ENCODE measurements at regions of chr1 and their contacts with region 1.

Region 1: GRCh38 chr1:229258031-229258756 is 12.7 kb upstream of the RAB4A start:
- DNase-seq: peak; percentile 75
- H3K4me3 Mint-ChIP-seq: no peak overlapping the region
- H3K27ac Mint-ChIP-seq: no peak overlapping the region
- H3K4me1 Mint-ChIP-seq: peaks cover 28% of the 10 kb centered on the region
- H3K27me3 Mint-ChIP-seq: no peaks in the 10 kb centered on the region

Region 2: GRCh38 chr1:228500901-228501871 is 757.0 kb before region 1 on chr1:
- CTCF ChIA-PET with region 1: no interaction called
- intact Hi-C with region 1: loop called (anchors 2 kb)
- DNase-seq: peak; percentile 97
- H3K4me3 Mint-ChIP-seq: peak overlapping the region; percentile 40
- H3K27ac Mint-ChIP-seq: peak overlapping the region; percentile 73
- H3K4me1 Mint-ChIP-seq: peaks cover 20% of the 10 kb centered on the region
- H3K27me3 Mint-ChIP-seq: no peaks in the 10 kb centered on the region

Region 3: GRCh38 chr1:228691926-228692325 is 566.3 kb before region 1 on chr1:
- CTCF ChIA-PET with region 1: interaction called, 6 read pairs
- intact Hi-C with region 1: loop called (anchors 1 kb)
- DNase-seq: peak; percentile 46
- H3K4me3 Mint-ChIP-seq: no peak overlapping the region
- H3K27ac Mint-ChIP-seq: no peak overlapping the region
- H3K4me1 Mint-ChIP-seq: peaks cover 10% of the 10 kb centered on the region
- H3K27me3 Mint-ChIP-seq: peaks cover 9% of the 10 kb centered on the region

Region 4: DNA sequence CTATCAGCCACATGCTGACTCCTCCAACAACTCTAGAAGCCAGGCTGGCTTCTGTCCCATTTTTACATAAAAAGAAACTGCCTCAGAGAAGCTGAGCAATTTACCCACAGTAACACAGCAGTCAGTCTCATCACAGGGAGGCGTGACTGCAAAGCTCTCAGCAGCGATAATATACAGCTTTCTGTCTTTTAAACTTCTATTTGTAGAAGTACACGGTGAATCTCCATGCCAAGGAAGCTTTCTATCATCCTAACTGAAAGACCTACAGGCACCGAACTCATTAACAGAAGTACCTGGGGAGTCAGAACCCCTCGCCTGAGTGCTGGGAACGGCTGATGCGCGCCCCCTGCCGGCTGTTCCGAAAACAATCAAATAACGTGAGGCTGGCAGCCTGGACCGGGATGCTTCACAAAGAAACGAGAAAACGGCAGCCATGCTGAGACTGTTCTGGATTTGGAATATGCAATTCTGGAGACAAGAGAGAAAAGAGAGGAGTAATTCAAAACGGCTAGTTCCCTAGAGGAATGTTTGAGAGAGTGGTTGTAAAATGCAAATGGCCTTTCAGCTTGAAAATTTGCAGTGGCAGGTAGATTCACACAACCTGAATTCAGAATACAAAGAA is 30.8 kb before region 1 on chr1:
- CTCF ChIA-PET with region 1: interaction called, 24 read pairs
- intact Hi-C with region 1: loop called (anchors 2 kb)
- DNase-seq: peak; percentile 85
- H3K4me3 Mint-ChIP-seq: no peak overlapping the region
- H3K27ac Mint-ChIP-seq: no peak overlapping the region
- H3K4me1 Mint-ChIP-seq: peaks cover 21% of the 10 kb centered on the region
- H3K27me3 Mint-ChIP-seq: peaks cover 2% of the 10 kb centered on the region

Region 5: GRCh38 chr1:229480495-229480894 is 222.3 kb after region 1 on chr1:
- CTCF ChIA-PET with region 1: interaction called, 54 read pairs
- intact Hi-C with region 1: loop called (anchors 1 kb)
- DNase-seq: no peak
- H3K4me3 Mint-ChIP-seq: no peak overlapping the region
- H3K27ac Mint-ChIP-seq: no peak overlapping the region
- H3K4me1 Mint-ChIP-seq: no peaks in the 10 kb centered on the region
- H3K27me3 Mint-ChIP-seq: no peaks in the 10 kb centered on the region

Region 6: GRCh38 chr1:229558571-229559335 is 300.6 kb after region 1 on chr1 and contains the start of gene ABCB10:
- CTCF ChIA-PET with region 1: no interaction called
- intact Hi-C with region 1: loop called (anchors 5 kb)
- DNase-seq: peak; percentile 92
- H3K4me3 Mint-ChIP-seq: peak within 1 kb of the TSS; percentile 88
- H3K27ac Mint-ChIP-seq: peak within 1 kb of the TSS; percentile 79
- H3K4me1 Mint-ChIP-seq: peaks cover 27% of the 10 kb centered on the region
- H3K27me3 Mint-ChIP-seq: no peaks in the 10 kb centered on the region
- total RNA-seq, gene ABCB10: 18.9 to 19.1 TPM

Region 7: GRCh38 chr1:229661022-229661877 is 403.1 kb after region 1 on chr1:
- CTCF ChIA-PET with region 1: interaction called, 3 read pairs
- intact Hi-C with region 1: loop called (anchors 1 kb)
- DNase-seq: peak; percentile 90
- H3K4me3 Mint-ChIP-seq: no peak overlapping the region
- H3K27ac Mint-ChIP-seq: no peak overlapping the region
- H3K4me1 Mint-ChIP-seq: peaks cover 12% of the 10 kb centered on the region
- H3K27me3 Mint-ChIP-seq: no peaks in the 10 kb centered on the region

Measured in activated naive CD4-positive, alpha-beta T cell treated with anti-CD3 and anti-CD28 coated beads for 36 hours (primary cell).